Natural killer cell (primary cell): ENCODE measurements at regions of chr3 and their contacts with region 1.

Region 1: DNA sequence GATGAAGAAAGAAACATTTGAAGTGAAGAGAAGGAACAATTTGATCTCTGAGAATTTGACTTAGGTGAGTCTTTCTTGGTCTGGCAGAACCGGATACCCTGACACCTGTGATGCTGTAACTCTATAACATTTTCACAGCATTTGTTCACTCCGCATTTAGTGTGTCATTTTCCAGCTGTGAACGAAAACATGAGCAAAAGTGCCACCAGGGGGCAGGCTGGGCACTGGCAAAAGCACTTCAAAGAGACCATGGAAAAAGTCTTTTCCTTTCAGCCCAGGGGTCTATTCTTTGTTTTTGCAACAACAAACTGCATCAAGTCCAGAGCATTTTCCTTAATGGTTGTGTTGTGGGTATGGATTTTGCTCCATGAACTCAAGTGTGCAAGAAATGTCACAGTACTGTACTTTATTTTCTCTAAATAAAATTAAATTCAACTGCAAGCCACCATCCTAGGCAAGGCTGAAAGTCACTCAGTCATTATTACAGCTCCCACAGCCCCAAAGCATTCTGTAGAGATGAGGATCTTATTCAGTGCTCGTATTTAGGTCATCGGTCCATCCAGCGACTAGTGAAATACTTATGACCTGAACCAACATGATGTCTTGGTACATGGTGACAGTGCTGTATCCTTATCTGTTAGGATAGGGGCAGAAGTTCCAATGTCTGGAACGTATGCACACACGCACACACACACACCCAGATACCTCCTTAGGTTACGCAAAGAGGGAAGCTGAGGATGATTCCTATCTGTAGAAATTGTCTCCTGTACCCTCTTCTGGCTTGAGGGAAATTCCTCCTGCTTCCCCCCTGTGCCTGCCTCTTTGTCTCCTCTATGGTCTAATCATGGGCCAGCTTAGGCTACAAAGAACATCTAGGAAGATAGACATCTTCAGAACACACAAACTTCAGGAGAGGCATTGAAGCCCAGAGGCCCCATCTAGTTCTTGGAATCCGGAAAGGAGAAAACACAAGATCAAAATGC is 125.5 kb downstream of the GADL1 start:
- DNase-seq: peak; percentile 55 to 78
- ATAC-seq: peak in 2 of 3 donors; percentile 55 to 59
- H3K4me3 ChIP-seq: no peak overlapping the region
- H3K4me3 Mint-ChIP-seq: peak overlapping the region; percentile 19
- H3K27ac ChIP-seq: no peak overlapping the region
- H3K27ac Mint-ChIP-seq: no peak overlapping the region
- H3K4me1 ChIP-seq: no peaks in the 10 kb centered on the region
- H3K4me1 Mint-ChIP-seq: peaks cover 13 to 16% of the 10 kb centered on the region in 2 donors
- H3K27me3 ChIP-seq: no peaks in the 10 kb centered on the region
- H3K27me3 Mint-ChIP-seq: peaks cover 0 to 3% of the 10 kb centered on the region in 2 donors
- CTCF ChIP-seq: peak; percentile 76

Region 2: DNA sequence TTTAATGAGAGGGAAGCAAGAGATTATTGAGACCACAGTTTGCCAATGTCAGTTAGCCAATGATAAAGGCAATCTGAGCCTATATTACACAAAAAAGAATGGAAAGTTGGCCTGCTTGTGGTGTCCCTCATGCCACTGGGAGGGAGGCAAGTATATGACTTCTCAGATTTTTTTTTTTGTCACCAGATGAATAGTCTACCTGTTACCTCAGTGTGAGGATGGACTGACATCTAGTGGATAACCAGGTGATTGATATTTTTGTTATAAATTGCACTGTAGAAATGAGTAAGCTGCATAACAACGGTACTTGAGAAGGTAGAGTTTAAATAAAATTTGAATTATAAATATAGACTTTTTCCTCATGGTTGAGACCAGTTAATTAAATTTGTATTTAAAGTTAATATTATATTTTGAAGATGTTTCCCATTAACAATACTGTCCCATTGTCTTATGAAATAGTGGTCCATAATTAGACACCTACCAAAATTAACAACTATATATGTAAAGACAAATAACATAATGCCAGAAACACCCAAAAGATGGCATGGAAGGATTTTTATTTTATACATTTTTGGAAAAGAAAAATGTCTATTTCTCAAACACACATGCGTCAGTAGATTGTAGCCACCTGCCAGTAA is 363.3 kb after region 1 on chr3:
- intact Hi-C with region 1: loop called (anchors 1 kb)
- DNase-seq: peak in 1 of 2 donors; percentile 66
- ATAC-seq: peak in 1 of 3 donors; percentile 59
- H3K4me3 ChIP-seq: no peak overlapping the region
- H3K4me3 Mint-ChIP-seq: no peak overlapping the region
- H3K27ac ChIP-seq: no peak overlapping the region
- H3K27ac Mint-ChIP-seq: no peak overlapping the region
- H3K4me1 ChIP-seq: no peaks in the 10 kb centered on the region
- H3K4me1 Mint-ChIP-seq: no peaks in the 10 kb centered on the region
- H3K27me3 ChIP-seq: no peaks in the 10 kb centered on the region
- H3K27me3 Mint-ChIP-seq: no peaks in the 10 kb centered on the region
- CTCF ChIP-seq: peak; percentile 49

Region 3: DNA sequence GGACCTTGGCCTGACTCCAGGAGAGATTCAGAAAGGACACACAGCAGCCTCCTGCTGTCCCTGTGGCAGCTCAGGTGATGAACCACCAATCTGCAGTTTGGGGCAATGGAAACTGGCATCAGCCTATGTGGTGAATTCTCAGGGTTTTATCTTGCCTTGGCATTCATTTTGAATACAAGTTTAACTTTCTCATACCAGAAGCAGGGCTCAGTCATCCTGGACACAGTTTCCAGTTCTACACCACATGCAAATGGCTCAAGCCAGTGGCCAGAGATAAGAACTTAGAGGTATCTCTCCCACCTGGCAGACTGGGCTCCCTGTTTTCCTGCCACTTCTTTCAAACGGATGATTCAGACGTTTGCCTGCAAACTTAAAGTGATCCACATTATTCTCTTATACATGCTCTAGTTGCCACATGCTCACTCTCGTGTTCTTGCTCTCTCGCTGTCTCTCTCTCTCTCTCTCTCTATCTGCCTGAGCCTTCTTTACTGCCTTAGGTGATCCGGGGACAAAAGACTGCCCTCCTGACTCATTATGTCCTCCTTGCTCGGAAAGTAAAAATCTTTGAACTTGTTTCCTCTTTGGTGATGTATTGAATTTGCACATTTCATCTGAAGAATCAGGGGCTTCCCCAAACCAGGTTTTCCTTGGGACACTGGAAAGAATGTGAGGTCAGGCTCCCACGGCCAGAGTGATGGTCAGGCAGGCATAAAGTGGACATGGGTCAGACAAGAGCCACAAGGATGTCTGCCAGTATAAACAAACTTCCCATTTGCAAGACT is 664.1 kb after region 1 on chr3:
- intact Hi-C with region 1: loop called (anchors 10 kb)
- DNase-seq: no peak
- ATAC-seq: no peak
- H3K4me3 ChIP-seq: no peak overlapping the region
- H3K4me3 Mint-ChIP-seq: no peak overlapping the region
- H3K27ac ChIP-seq: no peak overlapping the region
- H3K27ac Mint-ChIP-seq: no peak overlapping the region
- H3K4me1 ChIP-seq: no peaks in the 10 kb centered on the region
- H3K4me1 Mint-ChIP-seq: no peaks in the 10 kb centered on the region
- H3K27me3 ChIP-seq: no peaks in the 10 kb centered on the region
- H3K27me3 Mint-ChIP-seq: peaks cover 6 to 10% of the 10 kb centered on the region in 2 donors
- CTCF ChIP-seq: no peak

Region 4: DNA sequence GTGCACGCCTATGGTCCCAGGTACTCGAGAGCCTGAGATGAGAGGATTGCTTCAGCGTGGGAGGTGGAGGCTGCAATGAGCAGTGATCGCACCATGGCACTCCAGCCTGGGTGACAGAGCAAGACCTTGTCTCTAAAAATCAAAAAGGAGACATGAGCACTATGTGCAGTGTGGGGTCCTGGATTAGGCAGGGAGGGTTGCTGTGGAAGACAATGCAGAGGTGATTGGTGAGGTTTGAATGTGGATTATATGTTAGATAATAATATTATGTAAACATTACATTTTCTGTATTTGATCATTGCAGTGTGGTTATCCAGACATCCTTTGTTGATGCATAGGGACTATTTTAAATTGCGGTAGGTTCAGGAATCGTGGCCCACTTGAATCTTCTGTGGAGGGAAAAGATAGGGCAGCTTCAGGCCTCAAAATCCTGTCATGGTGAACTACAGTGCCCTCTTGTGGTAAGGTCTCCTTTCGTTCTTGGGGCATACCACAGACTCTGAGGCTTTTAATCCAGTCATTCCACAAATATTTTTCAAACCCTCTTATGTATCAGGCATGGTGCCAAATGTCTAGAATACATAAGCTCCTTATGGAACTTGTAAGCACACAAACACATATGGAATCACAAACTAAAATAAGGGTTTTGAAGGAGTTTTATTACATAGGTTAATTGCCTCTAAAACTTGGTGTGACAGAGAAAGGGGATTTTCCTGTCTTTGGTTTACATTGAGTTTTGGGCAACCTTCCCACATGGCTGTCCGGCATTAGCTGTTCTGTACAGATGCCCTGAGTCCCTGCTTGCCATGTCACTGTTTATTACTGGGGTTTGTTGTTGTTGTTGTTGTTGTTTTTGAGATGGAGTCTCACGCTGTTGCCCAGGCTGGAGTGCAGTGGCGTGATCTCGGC is 1375.1 kb after region 1 on chr3:
- intact Hi-C with region 1: loop called (anchors 5 kb)
- DNase-seq: peak in 1 of 2 donors; percentile 84
- ATAC-seq: peak; percentile 68 to 77 (median 72)
- H3K4me3 ChIP-seq: no peak overlapping the region
- H3K4me3 Mint-ChIP-seq: no peak overlapping the region
- H3K27ac ChIP-seq: no peak overlapping the region
- H3K27ac Mint-ChIP-seq: no peak overlapping the region
- H3K4me1 ChIP-seq: no peaks in the 10 kb centered on the region
- H3K4me1 Mint-ChIP-seq: peaks cover under 1 to 6% of the 10 kb centered on the region in 2 donors
- H3K27me3 ChIP-seq: no peaks in the 10 kb centered on the region
- H3K27me3 Mint-ChIP-seq: no peaks in the 10 kb centered on the region
- CTCF ChIP-seq: peak; percentile 84